ENCODE measurements at regions of chr20 and their contacts with region 1.

Region 1: GRCh38 chr20:31849455-31849925 is 4.1 kb upstream of the FOXS1 start:
- DNase-seq: no peak
- ATAC-seq: no peak
- H3K4me3 Mint-ChIP-seq: no peak overlapping the region
- H3K27ac Mint-ChIP-seq: no peak overlapping the region
- H3K4me1 Mint-ChIP-seq: no peaks in the 10 kb centered on the region
- H3K27me3 Mint-ChIP-seq: peaks cover 15% of the 10 kb centered on the region

Region 2: GRCh38 chr20:30937790-30938189 is 911.7 kb before region 1 on chr20:
- CTCF ChIA-PET with region 1: no interaction called
- POLR2A ChIA-PET with region 1: no interaction called
- intact Hi-C with region 1: no loop called
- DNase-seq: no peak
- ATAC-seq: no peak
- H3K4me3 Mint-ChIP-seq: no peak overlapping the region
- H3K27ac Mint-ChIP-seq: no peak overlapping the region
- H3K4me1 Mint-ChIP-seq: no peaks in the 10 kb centered on the region
- H3K27me3 Mint-ChIP-seq: no peaks in the 10 kb centered on the region

Region 3: DNA sequence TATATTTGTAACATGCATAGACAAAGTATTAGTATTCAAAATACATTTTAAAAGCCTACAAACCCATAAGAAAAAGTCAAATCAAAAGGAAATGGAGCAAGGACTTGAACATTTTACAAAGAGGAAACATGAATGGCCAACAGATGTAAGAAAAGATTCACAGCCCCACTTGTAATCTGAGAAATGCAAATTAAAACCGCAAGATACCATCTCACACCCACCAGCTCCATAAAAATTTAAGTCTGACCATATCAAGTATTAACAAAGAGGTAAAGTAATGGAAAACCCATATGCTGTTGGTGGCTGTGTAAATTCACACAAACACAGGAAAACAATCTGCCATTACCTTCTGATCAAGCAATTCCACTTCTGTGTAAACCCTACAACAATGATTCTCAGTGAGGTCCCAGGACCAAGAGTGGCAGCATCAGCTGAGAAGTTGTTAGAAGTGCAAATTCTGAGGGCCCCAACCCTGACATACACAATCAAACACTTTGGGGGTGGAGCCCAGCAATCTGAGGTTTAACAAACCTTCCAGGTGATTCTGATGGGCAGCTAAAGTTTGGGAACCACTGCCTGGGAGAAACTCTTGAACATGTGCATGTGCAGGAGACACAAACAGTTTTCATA is 157.7 kb before region 1 on chr20:
- CTCF ChIA-PET with region 1: no interaction called
- POLR2A ChIA-PET with region 1: no interaction called
- intact Hi-C with region 1: no loop called
- DNase-seq: no peak
- ATAC-seq: peak; percentile 23
- H3K4me3 Mint-ChIP-seq: no peak overlapping the region
- H3K27ac Mint-ChIP-seq: peak overlapping the region; percentile 44
- H3K4me1 Mint-ChIP-seq: peaks cover 60% of the 10 kb centered on the region
- H3K27me3 Mint-ChIP-seq: no peaks in the 10 kb centered on the region

Region 4: DNA sequence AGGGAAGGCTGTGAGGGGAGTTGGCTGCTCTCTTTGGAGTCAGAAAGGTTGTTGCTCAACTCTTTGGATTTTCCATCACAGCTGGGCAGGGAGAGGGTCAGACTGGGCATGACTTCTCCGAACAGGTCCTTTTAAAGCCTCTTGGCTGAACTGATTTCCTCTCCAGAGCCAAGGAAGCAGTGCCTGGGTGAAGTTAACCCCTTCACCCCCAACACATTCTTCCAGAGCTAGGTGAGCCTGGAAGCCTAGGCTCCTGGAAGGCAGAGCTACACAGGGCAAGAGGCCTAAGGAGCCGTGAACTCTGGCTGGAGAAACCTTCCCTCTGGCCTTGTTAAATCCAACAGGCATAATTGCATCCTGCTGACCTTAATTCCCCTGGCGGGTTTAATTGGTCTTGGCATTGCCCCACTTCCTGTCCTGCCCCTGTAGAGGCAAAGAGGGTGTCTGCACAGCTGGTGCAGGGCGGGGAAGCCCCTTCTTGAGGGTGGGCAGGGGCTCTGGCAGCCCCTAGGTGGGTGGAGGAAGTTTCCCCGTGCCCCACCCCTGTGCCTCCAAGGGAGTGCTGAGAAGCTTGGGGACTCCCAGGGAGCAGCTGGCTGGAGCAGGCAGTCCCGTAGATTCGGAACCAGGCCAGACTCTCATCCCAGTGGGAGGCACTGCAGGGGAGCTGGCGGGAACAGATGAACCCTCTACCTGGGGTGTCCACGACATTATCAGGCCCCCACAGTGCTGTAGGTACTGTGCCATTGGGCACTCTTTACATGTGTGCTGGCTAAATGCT is 33.9 kb before region 1 on chr20:
- CTCF ChIA-PET with region 1: interaction called, 10 read pairs
- POLR2A ChIA-PET with region 1: no interaction called
- intact Hi-C with region 1: no loop called
- DNase-seq: no peak
- ATAC-seq: no peak
- H3K4me3 Mint-ChIP-seq: no peak overlapping the region
- H3K27ac Mint-ChIP-seq: no peak overlapping the region
- H3K4me1 Mint-ChIP-seq: no peaks in the 10 kb centered on the region
- H3K27me3 Mint-ChIP-seq: no peaks in the 10 kb centered on the region

Region 5: GRCh38 chr20:31835977-31836852 is 13.3 kb before region 1 on chr20:
- CTCF ChIA-PET with region 1: interaction called, 19 read pairs
- POLR2A ChIA-PET with region 1: no interaction called
- intact Hi-C with region 1: no loop called
- DNase-seq: peak; percentile 42
- ATAC-seq: peak; percentile 60
- H3K4me3 Mint-ChIP-seq: no peak overlapping the region
- H3K27ac Mint-ChIP-seq: no peak overlapping the region
- H3K4me1 Mint-ChIP-seq: peaks cover 5% of the 10 kb centered on the region
- H3K27me3 Mint-ChIP-seq: no peaks in the 10 kb centered on the region

Region 6: GRCh38 chr20:31872406-31872805 is 22.9 kb after region 1 on chr20:
- CTCF ChIA-PET with region 1: interaction called, 10 read pairs
- POLR2A ChIA-PET with region 1: no interaction called
- intact Hi-C with region 1: no loop called
- DNase-seq: no peak
- ATAC-seq: no peak
- H3K4me3 Mint-ChIP-seq: no peak overlapping the region
- H3K27ac Mint-ChIP-seq: no peak overlapping the region
- H3K4me1 Mint-ChIP-seq: peaks cover 7% of the 10 kb centered on the region
- H3K27me3 Mint-ChIP-seq: peaks cover 28% of the 10 kb centered on the region

Region 7: GRCh38 chr20:32091888-32092346 is 242.4 kb after region 1 on chr20:
- CTCF ChIA-PET with region 1: interaction called, 7 read pairs
- POLR2A ChIA-PET with region 1: interaction called, 3 read pairs
- intact Hi-C with region 1: loop called (anchors 1 kb)
- DNase-seq: peak; percentile 92
- ATAC-seq: peak; percentile 96
- H3K4me3 Mint-ChIP-seq: no peak overlapping the region
- H3K27ac Mint-ChIP-seq: no peak overlapping the region
- H3K4me1 Mint-ChIP-seq: peaks cover 2% of the 10 kb centered on the region
- H3K27me3 Mint-ChIP-seq: peaks cover 14% of the 10 kb centered on the region

Measured in activated CD4-positive, alpha-beta T cell treated with anti-CD3 and anti-CD28 coated beads for 36 hours (primary cell).